Breast epithelium (tissue), 4 donors: ENCODE measurements at regions of chr22 and their contacts with region 1.

Region 1: DNA sequence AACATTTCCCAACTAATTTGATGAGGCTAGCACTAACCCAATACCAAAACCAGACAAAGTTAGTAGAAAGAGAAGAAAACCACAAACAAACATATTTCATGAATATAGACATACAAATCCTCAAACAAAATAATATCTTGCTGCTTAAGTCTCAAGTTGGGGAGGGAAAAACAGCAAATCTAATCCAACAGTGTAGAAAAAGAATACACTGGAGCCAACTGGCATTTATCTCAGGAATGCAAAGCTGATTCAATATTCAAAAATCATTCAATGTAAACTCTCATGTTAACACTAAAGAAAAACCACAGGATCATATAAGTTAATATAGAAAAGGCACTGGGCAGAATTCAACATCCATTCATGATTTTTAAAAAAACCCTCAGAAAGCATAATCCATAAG is 18.2 kb downstream of the GNB1L start:
- DNase-seq: no peak
- H3K4me3 ChIP-seq: no peak overlapping the region
- H3K27ac ChIP-seq: no peak overlapping the region
- H3K4me1 ChIP-seq: no peaks in the 10 kb centered on the region
- H3K27me3 ChIP-seq: no peaks in the 10 kb centered on the region
- CTCF ChIP-seq: no peak
- POLR2A ChIP-seq: no peak

Region 2: GRCh38 chr22:19874307-19875060 is 38.0 kb after region 1 on chr22:
- intact Hi-C with region 1: loop called (anchors 2 kb)
- DNase-seq: peak in 1 of 2 donors; percentile 51
- H3K4me3 ChIP-seq: no peak overlapping the region
- H3K27ac ChIP-seq: no peak overlapping the region
- H3K4me1 ChIP-seq: no peaks in the 10 kb centered on the region
- H3K27me3 ChIP-seq: no peaks in the 10 kb centered on the region
- CTCF ChIP-seq: no peak
- POLR2A ChIP-seq: no peak

Region 3: GRCh38 chr22:19909350-19910179 is 73.1 kb after region 1 on chr22:
- intact Hi-C with region 1: no loop called
- DNase-seq: peak; percentile 75 to 76
- H3K4me3 ChIP-seq: no peak overlapping the region
- H3K27ac ChIP-seq: no peak overlapping the region
- H3K4me1 ChIP-seq: no peaks in the 10 kb centered on the region
- H3K27me3 ChIP-seq: no peaks in the 10 kb centered on the region
- CTCF ChIP-seq: peak; percentile 79 to 96 (median 87)
- POLR2A ChIP-seq: no peak